Calu3 (cell line): ENCODE measurements at regions of chr22 and their contacts with region 1.

Region 1: DNA sequence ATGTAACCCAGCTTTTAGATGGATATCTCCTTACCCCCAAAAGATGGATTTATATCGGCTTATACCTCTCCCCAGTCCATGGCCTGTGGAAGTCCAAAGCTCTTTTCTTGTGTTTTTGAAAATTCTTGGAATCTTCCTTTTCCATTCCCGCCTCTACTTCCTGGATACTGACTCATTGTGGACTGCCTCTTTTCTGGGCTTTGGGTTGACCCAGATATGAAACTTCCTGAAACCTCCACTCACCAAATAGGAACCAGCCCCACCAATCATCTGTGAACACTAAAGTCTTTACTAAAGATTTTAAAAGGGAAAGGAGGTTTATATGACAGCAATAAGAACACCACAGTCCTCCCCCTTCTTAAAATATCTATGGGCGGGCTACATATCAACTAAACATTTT is 163.4 kb upstream of the SYN3 start:
- DNase-seq: no peak
- H3K4me3 Mint-ChIP-seq: no peak overlapping the region
- H3K27ac Mint-ChIP-seq: no peak overlapping the region
- H3K4me1 Mint-ChIP-seq: no peaks in the 10 kb centered on the region
- H3K27me3 Mint-ChIP-seq: peaks cover 53% of the 10 kb centered on the region
- CTCF ChIP-seq: no peak

Region 2: DNA sequence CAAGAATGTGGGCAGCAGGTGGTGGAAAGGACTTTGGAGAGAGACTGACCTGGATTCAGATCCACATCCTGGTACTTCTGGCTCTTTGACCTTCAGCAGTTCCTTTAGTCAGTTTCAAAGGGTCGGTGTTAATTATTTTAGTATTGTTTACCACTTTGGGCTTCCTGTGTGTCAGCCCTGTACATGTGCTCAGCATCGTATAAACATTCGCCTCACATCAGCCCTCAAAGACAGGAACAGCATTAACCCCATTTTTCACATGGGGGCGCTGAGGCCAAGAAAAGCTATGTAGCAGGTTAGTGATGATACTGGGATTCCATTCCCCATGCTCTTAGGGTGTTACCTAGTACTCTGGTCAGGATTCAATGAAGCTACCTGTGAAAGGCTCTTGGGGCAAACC is 1349.4 kb before region 1 on chr22:
- CTCF ChIA-PET with region 1: interaction called, 11 read pairs
- intact Hi-C with region 1: no loop called
- DNase-seq: peak; percentile 2
- H3K4me3 Mint-ChIP-seq: no peak overlapping the region
- H3K27ac Mint-ChIP-seq: no peak overlapping the region
- H3K4me1 Mint-ChIP-seq: no peaks in the 10 kb centered on the region
- H3K27me3 Mint-ChIP-seq: no peaks in the 10 kb centered on the region
- CTCF ChIP-seq: no peak